ENCODE measurements at regions of chr1 and their contacts with region 1.

Region 1: DNA sequence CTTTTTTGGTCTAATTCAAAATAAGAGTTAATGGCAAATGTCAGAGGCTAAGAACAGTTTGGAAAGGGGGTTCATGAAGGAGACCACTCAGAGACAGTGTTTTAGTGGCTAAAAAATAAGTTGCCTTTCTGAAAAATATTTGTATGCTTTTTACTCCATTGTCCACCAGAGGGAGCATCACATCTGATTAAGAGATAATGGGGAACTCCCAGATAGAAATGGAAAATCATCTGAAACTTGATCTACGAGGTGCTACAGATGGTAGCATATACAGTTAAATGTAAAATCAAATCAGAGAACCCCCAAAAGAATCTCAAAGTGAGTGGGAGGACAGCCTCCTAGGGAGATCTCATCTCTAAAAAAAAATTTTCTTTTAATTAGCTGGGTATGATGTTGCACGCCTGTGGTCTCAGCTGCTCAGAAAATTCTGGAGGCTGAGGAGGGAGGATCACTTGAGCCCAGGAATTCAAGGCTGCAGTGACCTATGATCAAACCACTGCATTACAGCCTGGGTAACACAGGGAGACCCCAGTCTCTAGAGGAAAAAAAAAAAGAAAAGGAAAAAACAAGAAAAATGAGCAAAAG is 9.7 kb downstream of the SMYD3 start:
- DNase-seq: no peak
- ATAC-seq: peak; percentile 86
- H3K4me3 ChIP-seq: no peak overlapping the region
- H3K27ac ChIP-seq: no peak overlapping the region
- H3K4me1 ChIP-seq: no peaks in the 10 kb centered on the region; the same call in 1 of the 2 replicates
- H3K27me3 ChIP-seq: no peaks in the 10 kb centered on the region
- CTCF ChIP-seq: peak; percentile 52 to 78 (median 57); a peak in 5 of 6 replicates
- EP300 ChIP-seq: no peak
- POLR2A ChIP-seq: no peak
- RAD21 ChIP-seq: peak; percentile 81

Region 2: DNA sequence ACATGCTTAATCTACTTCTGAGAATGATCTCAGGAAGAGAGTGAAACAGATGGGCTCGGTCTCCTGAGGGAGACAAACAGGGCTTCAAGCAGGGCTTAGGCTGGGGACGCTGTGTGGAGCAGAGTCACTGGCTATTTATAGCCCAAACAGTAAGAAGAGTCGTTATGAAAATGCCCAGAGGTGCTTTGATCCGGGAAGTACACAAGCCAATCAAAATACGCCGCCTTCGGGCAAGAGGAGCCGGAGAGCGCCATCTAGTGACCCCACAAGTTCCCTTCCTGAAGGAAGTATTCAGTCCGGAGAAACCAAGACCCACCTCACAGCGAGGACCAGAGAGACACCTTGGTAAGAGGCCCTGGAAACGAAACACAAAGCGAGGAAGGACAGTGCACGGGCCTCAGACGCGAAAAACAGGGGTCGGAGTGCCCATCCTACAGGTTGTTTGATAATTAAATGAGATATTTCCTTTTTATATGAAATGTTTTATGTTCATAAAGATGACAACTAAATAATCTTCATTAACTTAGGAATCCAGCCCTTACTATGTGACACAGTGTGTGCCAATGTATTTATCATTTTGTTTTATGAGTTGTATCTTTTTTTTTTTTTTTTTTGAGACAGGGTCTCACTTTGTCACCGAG is 201.8 kb after region 1 on chr1:
- CTCF ChIA-PET with region 1: interaction called, 18 read pairs
- POLR2A ChIA-PET with region 1: no interaction called
- RAD21 ChIA-PET with region 1: interaction called, 4 read pairs
- SMC1A ChIA-PET with region 1: interaction called, 3 read pairs
- in situ Hi-C with region 1: loop called (anchors 5 kb)
- intact Hi-C with region 1: loop called (anchors 1 kb)
- DNase-seq: peak; percentile 76
- ATAC-seq: peak; percentile 97
- H3K4me3 ChIP-seq: 0 out of 2 replicates have a peak overlapping the region, but pooled peaks have one; percentile 13
- H3K27ac ChIP-seq: peak overlapping the region; percentile 50
- H3K4me1 ChIP-seq: peaks cover 4% of the 10 kb centered on the region
- H3K27me3 ChIP-seq: no peaks in the 10 kb centered on the region
- CTCF ChIP-seq: peak; percentile 79 to 90 (median 90)
- EP300 ChIP-seq: no peak
- POLR2A ChIP-seq: no peak; the same call in 1 of the 2 replicates
- RAD21 ChIP-seq: peak; percentile 89